H1 (cell line): ENCODE measurements at regions of chr20 and their contacts with region 1.

Region 1: GRCh38 chr20:57351042-57351783 is at the start of gene RAE1:
- DNase-seq: peak; percentile 38 to 90
- H3K4me3 ChIP-seq: peak within 1 kb of the TSS; percentile 94 to 99 (median 98)
- H3K27ac ChIP-seq: peak within 1 kb of the TSS; percentile 86
- H3K4me1 ChIP-seq: peaks cover 0 to 9% (median 4%) of the 10 kb centered on the region in 4 experiments; a peak in 5 of 7 replicates
- H3K27me3 ChIP-seq: no peaks in the 10 kb centered on the region
- CTCF ChIP-seq: no peak
- EP300 ChIP-seq: no peak
- POLR2A ChIP-seq: peak; percentile 53 to 87
- RAD21 ChIP-seq: no peak
- total RNA-seq, gene RAE1: 33.0 and 35.9 TPM in 2 replicates

Region 2: GRCh38 chr20:57089691-57090150 is 261.5 kb before region 1 on chr20:
- CTCF ChIA-PET with region 1: interaction called, 83 read pairs
- POLR2A ChIA-PET with region 1: no interaction called
- DNase-seq: peak; percentile 43 to 97
- H3K4me3 ChIP-seq: no peak overlapping the region
- H3K27ac ChIP-seq: no peak overlapping the region
- H3K4me1 ChIP-seq: peaks cover 0 to 6% (median 4%) of the 10 kb centered on the region in 4 experiments; a peak in 4 of 7 replicates
- H3K27me3 ChIP-seq: peaks cover 0 to 14% (median 7%) of the 10 kb centered on the region in 4 experiments; a peak in 5 of 7 replicates
- CTCF ChIP-seq: peak; percentile 86 to 97 (median 88)
- EP300 ChIP-seq: no peak
- POLR2A ChIP-seq: no peak
- RAD21 ChIP-seq: peak; percentile 96 to 98

Region 3: DNA sequence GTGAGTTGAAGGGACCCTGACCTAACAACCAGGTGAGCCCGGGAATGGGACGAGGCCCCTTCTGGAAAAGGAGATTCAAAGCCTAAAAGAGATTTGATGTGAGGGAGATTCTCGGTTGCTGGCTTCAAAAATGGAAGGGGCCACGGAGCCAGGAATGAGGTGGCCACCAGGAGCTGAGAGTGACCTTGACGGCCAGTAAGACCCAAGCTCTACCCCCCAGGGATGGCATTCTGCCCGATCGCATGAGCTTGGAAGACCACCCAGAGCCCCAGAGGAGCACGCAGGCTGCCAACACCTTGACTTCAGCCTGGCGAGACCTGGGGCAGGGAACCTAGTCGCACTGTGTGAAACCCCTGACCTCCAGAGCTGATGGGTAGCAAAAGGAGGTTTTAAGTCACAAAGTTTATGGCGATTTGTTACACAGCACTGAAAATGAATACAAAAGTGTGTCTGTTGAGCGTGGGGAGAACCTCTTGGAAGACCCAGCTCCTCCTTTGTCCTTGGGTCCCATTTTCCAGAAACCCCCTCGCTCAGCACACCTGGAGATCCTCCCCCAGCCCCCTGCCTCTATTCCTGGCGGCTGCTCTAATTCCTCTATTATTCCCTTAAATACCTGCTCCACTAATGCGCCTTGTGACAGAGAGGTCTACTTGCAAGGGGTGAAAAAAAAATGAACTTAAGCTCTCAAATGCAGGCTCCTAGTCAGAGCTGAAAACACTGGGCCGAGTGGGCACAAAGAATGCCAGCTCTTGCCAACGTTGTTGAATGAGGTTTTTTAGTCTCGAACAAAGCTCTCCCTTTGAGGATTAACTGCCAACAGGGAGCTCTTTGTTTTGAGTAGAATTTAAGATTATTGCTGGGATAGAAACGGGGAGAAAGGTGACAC is 248.4 kb before region 1 on chr20:
- CTCF ChIA-PET with region 1: interaction called, 13 read pairs
- POLR2A ChIA-PET with region 1: no interaction called
- DNase-seq: no peak
- H3K4me3 ChIP-seq: no peak overlapping the region
- H3K27ac ChIP-seq: no peak overlapping the region
- H3K4me1 ChIP-seq: no peaks in the 10 kb centered on the region
- H3K27me3 ChIP-seq: no peaks in the 10 kb centered on the region
- CTCF ChIP-seq: no peak
- EP300 ChIP-seq: no peak
- POLR2A ChIP-seq: no peak
- RAD21 ChIP-seq: no peak

Region 4: DNA sequence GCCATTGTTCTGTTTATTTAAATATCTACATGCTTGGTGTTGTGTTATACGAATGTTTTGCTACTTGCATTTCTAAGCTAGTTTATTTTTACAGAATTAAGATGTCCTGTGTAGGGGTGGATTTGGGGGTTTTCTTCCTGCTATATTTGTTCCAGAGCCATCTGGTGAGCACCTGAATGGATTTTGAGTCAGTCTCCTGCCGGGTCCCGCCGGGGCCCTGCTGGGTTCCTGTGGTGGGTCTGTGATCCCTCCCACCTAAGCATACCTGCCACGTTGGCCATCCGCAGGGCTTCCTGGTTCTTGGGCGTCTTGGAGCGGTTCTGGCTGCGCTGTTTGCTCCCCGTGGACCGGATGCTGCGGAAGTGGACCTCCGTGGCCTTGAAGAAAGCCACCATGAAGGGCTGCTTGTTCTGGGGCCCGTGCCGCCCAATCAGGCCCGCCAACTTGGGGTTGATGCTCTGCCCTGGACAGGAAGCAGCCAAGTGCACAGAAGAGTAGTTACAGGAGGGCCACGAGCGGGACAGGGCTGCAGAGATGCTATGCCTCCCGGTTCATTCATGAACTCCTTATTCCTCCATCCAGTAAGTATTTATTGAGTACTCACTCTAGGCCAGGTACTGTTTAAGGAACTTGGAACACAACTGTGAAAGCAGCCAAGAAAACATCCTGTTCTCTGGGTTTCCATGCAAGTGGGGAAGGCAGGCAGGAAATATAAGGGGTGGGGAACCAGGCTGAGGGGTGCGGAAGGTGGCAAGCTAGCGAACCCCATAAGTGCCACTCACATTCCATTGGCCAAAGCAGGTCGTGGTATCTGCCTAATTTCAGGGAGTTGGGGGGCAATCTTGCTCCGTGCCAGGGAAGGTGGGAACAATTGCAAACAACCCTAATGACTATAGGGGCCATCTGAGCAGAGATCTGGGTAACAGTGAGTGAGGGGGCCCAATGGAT is 167.5 kb before region 1 on chr20:
- CTCF ChIA-PET with region 1: no interaction called
- POLR2A ChIA-PET with region 1: no interaction called
- DNase-seq: no peak
- H3K4me3 ChIP-seq: no peak overlapping the region
- H3K27ac ChIP-seq: no peak overlapping the region
- H3K4me1 ChIP-seq: peaks cover 0 to 16% (median 1%) of the 10 kb centered on the region in 4 experiments; a peak in 5 of 7 replicates
- H3K27me3 ChIP-seq: no peaks in the 10 kb centered on the region
- CTCF ChIP-seq: no peak
- EP300 ChIP-seq: no peak
- POLR2A ChIP-seq: no peak
- RAD21 ChIP-seq: no peak

Region 5: GRCh38 chr20:57244627-57245214 is 106.5 kb before region 1 on chr20:
- CTCF ChIA-PET with region 1: interaction called, 11 read pairs
- POLR2A ChIA-PET with region 1: no interaction called
- DNase-seq: peak in 1 of 2 experiments; percentile 57
- H3K4me3 ChIP-seq: no peak overlapping the region
- H3K27ac ChIP-seq: no peak overlapping the region
- H3K4me1 ChIP-seq: peaks cover 0 to 8% (median 2%) of the 10 kb centered on the region in 4 experiments; a peak in 3 of 7 replicates
- H3K27me3 ChIP-seq: no peaks in the 10 kb centered on the region
- CTCF ChIP-seq: peak; percentile 42 to 66 (median 57)
- EP300 ChIP-seq: no peak
- POLR2A ChIP-seq: no peak
- RAD21 ChIP-seq: peak; percentile 63 to 71; a peak in 3 of 4 replicates

Region 6: DNA sequence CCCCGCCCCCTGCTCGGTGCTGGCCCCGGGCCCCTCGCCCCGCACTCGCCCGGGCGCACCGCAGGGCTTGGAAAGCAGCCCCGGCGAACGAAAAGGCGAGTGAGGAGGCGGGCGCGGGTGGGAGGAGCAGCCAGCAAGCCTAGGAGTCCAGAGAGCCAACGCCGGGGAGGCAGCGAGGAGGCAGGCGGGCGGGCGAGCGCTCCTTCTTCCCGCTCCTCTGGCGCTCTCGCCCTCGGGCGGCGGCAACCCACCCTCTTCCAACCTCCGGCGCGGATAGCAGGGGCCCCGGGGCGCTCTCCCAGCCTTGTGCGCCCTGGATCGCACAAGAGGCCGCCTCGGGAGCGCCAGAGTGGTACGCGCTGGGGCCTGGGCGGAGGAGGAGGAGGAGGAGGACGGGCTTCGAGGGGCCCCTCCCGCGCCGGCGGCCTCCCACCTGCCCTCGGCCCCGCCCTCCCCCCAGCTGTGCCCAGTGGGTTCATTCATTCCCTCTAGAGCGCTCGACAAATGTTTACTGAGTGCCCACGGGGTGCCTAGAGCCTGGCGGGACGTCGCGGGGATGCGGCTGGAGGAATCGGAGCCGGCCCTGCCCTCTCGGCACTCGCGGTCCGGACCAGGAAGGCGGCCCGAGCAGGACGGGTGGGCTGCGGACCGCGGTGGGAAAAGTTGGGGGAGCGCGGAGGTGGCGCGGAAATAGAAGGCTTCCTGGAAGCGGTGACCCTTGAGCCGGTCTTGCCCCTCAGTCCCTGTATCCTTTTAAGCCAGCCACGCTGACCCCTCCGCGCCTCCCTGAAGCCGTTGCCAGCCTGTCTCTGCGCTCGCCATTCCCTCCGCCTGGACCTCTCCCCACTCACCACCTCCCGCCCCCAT is 84.7 kb before region 1 on chr20 and contains the start of gene BMP7:
- CTCF ChIA-PET with region 1: interaction called, 10 read pairs
- POLR2A ChIA-PET with region 1: no interaction called
- DNase-seq: peak in 1 of 2 experiments; percentile 87
- H3K4me3 ChIP-seq: peak within 1 kb of the TSS; percentile 65 to 78 (median 74)
- H3K27ac ChIP-seq: no peak within 1 kb of the TSS
- H3K4me1 ChIP-seq: peaks cover 23 to 46% (median 39%) of the 10 kb centered on the region in 4 experiments
- H3K27me3 ChIP-seq: peaks cover 33 to 83% (median 75%) of the 10 kb centered on the region in 4 experiments
- CTCF ChIP-seq: no peak
- EP300 ChIP-seq: no peak
- POLR2A ChIP-seq: no peak
- RAD21 ChIP-seq: no peak
- total RNA-seq, gene BMP7: 7.2 and 9.2 TPM in 2 replicates

Region 7: GRCh38 chr20:57335392-57335791 is 15.8 kb before region 1 on chr20:
- CTCF ChIA-PET with region 1: interaction called, 52 read pairs
- POLR2A ChIA-PET with region 1: no interaction called
- DNase-seq: no peak
- H3K4me3 ChIP-seq: no peak overlapping the region
- H3K27ac ChIP-seq: no peak overlapping the region
- H3K4me1 ChIP-seq: no peaks in the 10 kb centered on the region
- H3K27me3 ChIP-seq: no peaks in the 10 kb centered on the region
- CTCF ChIP-seq: no peak
- EP300 ChIP-seq: no peak
- POLR2A ChIP-seq: no peak
- RAD21 ChIP-seq: no peak

Region 8: DNA sequence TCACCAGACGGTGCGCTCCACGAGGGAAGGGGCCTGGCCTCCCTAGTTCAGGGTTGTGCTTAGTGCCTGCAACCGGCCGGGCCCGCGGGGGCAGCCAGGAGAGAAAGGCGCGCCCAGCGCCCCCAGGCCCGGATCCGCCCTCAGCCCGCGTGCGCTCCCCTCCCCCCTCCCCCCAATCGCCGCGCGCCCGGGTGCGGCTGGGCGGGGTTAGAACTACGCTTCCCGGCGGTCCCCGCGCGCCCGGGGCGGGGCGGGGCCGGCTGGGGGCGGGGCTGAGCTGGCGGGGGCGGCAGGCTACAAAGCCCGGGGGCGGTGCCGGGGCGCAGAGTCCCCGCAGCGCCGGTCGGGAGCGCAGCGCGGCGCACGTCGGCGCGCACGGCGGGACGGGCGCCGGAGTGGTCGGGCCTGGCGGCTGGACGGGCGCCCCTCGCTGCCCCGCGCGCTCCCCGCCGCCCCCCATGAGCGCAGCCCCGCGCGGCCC is 39.9 kb after region 1 on chr20 and contains the start of gene RBM38:
- CTCF ChIA-PET with region 1: no interaction called
- POLR2A ChIA-PET with region 1: interaction called, 10 read pairs
- DNase-seq: peak in 1 of 2 experiments; percentile 86
- H3K4me3 ChIP-seq: peak within 1 kb of the TSS; percentile 60 to 94 (median 72)
- H3K27ac ChIP-seq: peak within 1 kb of the TSS; percentile 31; the same call in 1 of the 2 replicates
- H3K4me1 ChIP-seq: peaks cover 5 to 27% (median 18%) of the 10 kb centered on the region in 4 experiments
- H3K27me3 ChIP-seq: peaks cover 0 to 10% (median 4%) of the 10 kb centered on the region in 4 experiments; a peak in 4 of 7 replicates
- CTCF ChIP-seq: no peak
- EP300 ChIP-seq: no peak
- POLR2A ChIP-seq: peak in 1 of 2 experiments; percentile 22; a peak in 1 of 3 replicates
- RAD21 ChIP-seq: no peak
- total RNA-seq, gene RBM38: 57.7 and 60.1 TPM in 2 replicates

Region 9: DNA sequence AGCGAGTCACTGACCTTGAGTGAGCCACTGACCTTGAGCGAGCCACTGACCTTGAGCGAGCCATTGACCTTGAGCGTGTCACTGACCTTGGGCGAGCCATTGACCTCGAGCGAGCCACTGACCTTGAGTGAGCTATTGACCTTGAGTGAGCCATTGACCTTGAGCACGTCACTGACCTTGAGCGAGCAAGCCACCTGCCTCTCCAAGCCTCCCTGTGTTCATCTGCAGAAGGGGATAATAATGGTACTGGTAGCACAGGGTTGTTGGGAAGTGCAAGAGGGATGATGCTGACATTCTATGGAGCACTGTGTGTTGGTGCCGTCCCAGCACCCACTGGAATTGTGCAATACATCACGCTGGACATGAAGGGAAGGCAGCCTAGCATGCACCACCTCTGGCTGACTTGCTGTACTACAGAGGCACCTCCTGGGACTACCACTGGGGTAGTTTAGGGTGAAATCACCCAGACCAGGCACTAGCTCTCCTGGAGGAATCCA is 113.5 kb after region 1 on chr20:
- CTCF ChIA-PET with region 1: no interaction called
- POLR2A ChIA-PET with region 1: no interaction called
- DNase-seq: no peak
- H3K4me3 ChIP-seq: no peak overlapping the region
- H3K27ac ChIP-seq: 0 out of 2 replicates have a peak overlapping the region, but pooled peaks have one; percentile 7
- H3K4me1 ChIP-seq: peaks cover 0 to 11% (median 3%) of the 10 kb centered on the region in 4 experiments; a peak in 5 of 7 replicates
- H3K27me3 ChIP-seq: no peaks in the 10 kb centered on the region; a peak in 1 of 7 replicates
- CTCF ChIP-seq: peak; percentile 48 to 61 (median 55)
- EP300 ChIP-seq: no peak
- POLR2A ChIP-seq: no peak
- RAD21 ChIP-seq: peak in 1 of 2 experiments; percentile 4; a peak in 1 of 4 replicates

Region 10: GRCh38 chr20:57546956-57547649 is 195.9 kb after region 1 on chr20:
- CTCF ChIA-PET with region 1: no interaction called
- POLR2A ChIA-PET with region 1: no interaction called
- DNase-seq: no peak
- H3K4me3 ChIP-seq: no peak overlapping the region
- H3K27ac ChIP-seq: no peak overlapping the region
- H3K4me1 ChIP-seq: no peaks in the 10 kb centered on the region
- H3K27me3 ChIP-seq: no peaks in the 10 kb centered on the region
- CTCF ChIP-seq: no peak
- EP300 ChIP-seq: no peak
- POLR2A ChIP-seq: no peak
- RAD21 ChIP-seq: no peak